Mammary epithelial cell (primary cell): ENCODE measurements at regions of chr1 and their contacts with region 1.

Region 1: GRCh38 chr1:86650065-86650464 is 54.3 kb upstream of the SH3GLB1 start:
- DNase-seq: no peak
- H3K4me3 ChIP-seq: no peak overlapping the region
- H3K27ac ChIP-seq: no peak overlapping the region
- H3K4me1 ChIP-seq: peaks cover 6% of the 10 kb centered on the region
- H3K27me3 ChIP-seq: no peaks in the 10 kb centered on the region
- CTCF ChIP-seq: peak in 1 of 2 donors; percentile 43

Region 2: DNA sequence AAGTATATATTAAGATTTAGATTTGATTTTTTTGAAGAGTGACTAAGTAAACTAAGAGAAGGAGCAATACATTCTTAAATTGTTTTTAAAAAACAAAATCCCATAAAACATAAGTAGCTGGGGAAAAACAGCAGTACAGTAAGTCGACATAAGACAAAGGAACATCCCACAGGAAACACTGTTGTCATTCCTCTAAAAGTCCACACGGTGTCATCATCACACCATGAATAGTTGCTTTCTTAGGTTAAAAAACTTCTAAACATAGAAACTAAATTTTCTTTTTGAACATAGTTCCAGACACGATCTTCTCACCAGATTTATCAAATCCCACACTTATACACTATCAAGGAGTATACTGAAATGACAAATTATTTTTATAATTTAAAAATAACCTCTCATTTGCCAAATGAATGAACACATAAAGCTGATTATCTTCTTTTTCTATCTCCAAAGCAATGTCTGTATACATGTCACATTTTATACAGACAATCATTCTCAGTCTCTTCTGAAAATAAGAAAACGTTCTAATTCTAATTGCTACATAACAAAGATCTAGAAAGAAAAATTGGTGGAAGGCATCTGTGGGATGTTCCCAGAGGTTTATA is 269.7 kb before region 1 on chr1:
- CTCF ChIA-PET with region 1: no interaction called
- dilution Hi-C with region 1: no loop called
- in situ Hi-C with region 1: no loop called
- intact Hi-C with region 1: loop called (anchors 5 kb)
- DNase-seq: peak; percentile 51
- H3K4me3 ChIP-seq: no peak overlapping the region
- H3K27ac ChIP-seq: no peak overlapping the region
- H3K4me1 ChIP-seq: no peaks in the 10 kb centered on the region
- H3K27me3 ChIP-seq: no peaks in the 10 kb centered on the region
- CTCF ChIP-seq: peak; percentile 58 to 70

Region 3: GRCh38 chr1:86419277-86419903 is 230.7 kb before region 1 on chr1:
- CTCF ChIA-PET with region 1: no interaction called
- dilution Hi-C with region 1: no loop called
- in situ Hi-C with region 1: no loop called
- intact Hi-C with region 1: loop called (anchors 1 kb)
- DNase-seq: peak; percentile 52
- H3K4me3 ChIP-seq: no peak overlapping the region
- H3K27ac ChIP-seq: no peak overlapping the region
- H3K4me1 ChIP-seq: peaks cover 37% of the 10 kb centered on the region
- H3K27me3 ChIP-seq: no peaks in the 10 kb centered on the region
- CTCF ChIP-seq: peak; percentile 76 to 87

Region 4: GRCh38 chr1:86515597-86515996 is 134.5 kb before region 1 on chr1:
- CTCF ChIA-PET with region 1: interaction called, 5 read pairs
- dilution Hi-C with region 1: no loop called
- in situ Hi-C with region 1: no loop called
- intact Hi-C with region 1: loop called (anchors 1 kb)
- DNase-seq: peak; percentile 46
- H3K4me3 ChIP-seq: no peak overlapping the region
- H3K27ac ChIP-seq: no peak overlapping the region
- H3K4me1 ChIP-seq: peaks cover 21% of the 10 kb centered on the region
- H3K27me3 ChIP-seq: no peaks in the 10 kb centered on the region
- CTCF ChIP-seq: peak; percentile 46 to 83

Region 5: GRCh38 chr1:86596741-86597290 is 53.2 kb before region 1 on chr1:
- CTCF ChIA-PET with region 1: no interaction called
- dilution Hi-C with region 1: loop called (anchors 10 kb)
- in situ Hi-C with region 1: no loop called
- intact Hi-C with region 1: no loop called
- DNase-seq: peak; percentile 82
- H3K4me3 ChIP-seq: no peak overlapping the region
- H3K27ac ChIP-seq: no peak overlapping the region
- H3K4me1 ChIP-seq: peaks cover 10% of the 10 kb centered on the region
- H3K27me3 ChIP-seq: no peaks in the 10 kb centered on the region
- CTCF ChIP-seq: no peak